ENCODE measurements at regions of chr11 and their contacts with region 1.

Region 1: DNA sequence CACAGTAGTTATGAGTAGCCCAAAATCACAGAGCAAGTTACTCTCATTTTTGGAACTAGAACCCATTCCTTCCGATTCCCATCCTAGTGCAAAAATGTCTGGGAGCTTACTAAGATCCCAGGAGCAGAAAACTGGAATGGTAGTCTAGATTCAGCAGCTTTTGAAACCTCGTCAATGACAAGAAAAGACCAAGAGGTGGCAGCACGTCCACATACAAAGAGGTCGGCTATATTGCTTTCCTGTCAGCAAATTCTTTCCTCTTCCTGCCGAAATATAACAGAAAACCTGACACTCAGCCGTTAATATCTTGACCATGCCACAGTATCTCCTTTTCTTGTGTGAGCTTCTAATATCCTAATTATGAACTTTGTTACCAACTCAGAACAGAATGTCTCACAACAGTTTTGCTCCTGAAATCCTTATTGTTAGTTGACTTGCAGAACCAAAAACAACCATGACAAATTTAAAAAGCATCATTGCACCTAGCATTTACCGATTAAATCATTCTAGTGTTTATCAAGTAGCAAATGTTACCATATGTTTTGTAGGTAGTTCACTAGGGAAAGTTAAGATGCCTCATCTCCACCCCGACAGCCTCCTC is 92.8 kb upstream of the OR9G4 start:
- DNase-seq: peak in 1 of 2 donors; percentile 52
- ATAC-seq: peak; percentile 91

Region 2: GRCh38 chr11:56453521-56453920 is 387.8 kb before region 1 on chr11:
- intact Hi-C with region 1: no loop called
- DNase-seq: no peak
- ATAC-seq: no peak

Region 3: GRCh38 chr11:56764976-56765375 is 76.3 kb before region 1 on chr11:
- intact Hi-C with region 1: no loop called
- DNase-seq: no peak
- ATAC-seq: no peak

Region 4: DNA sequence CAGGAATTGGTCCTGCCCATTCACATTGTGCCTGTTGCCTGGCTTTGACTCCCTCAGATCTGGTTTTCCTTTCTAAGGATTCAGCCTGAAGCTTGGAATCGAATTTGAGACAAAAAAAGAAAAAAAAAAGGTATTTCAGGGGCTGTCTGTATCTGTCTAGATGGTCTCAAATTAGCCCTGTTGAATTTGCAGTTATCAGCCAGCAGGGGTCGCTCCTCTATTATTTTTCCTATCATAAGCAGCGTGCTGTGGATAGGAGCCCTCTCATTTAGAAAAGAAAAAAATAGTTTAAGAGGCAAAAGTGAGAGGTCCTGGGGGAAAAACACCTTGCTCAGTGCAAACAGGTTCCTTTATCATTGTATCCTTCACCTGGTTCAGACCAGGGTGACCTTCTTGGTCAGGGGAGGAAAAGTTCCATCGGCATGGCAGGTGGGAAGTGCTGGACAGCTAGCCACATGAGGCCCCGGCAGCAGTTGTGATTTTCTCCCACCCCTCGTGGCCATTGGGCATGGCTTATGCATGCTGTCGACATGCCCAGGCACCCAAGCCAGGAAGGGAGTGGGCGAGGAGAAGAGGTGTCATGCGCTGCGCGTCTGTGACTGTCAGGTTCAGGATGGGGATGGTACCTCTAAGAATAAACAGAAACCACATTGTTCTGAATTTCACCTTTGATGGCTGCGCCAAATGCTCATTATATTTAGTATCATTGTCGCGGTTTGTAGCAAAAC is 160.5 kb after region 1 on chr11:
- intact Hi-C with region 1: no loop called
- DNase-seq: no peak
- ATAC-seq: no peak

Region 5: GRCh38 chr11:57124917-57125316 is 283.6 kb after region 1 on chr11:
- intact Hi-C with region 1: loop called in 1 of 2 experiments (anchors 10 kb)
- DNase-seq: no peak
- ATAC-seq: no peak